ENCODE measurements at regions of chr6 and their contacts with region 1.

Region 1: DNA sequence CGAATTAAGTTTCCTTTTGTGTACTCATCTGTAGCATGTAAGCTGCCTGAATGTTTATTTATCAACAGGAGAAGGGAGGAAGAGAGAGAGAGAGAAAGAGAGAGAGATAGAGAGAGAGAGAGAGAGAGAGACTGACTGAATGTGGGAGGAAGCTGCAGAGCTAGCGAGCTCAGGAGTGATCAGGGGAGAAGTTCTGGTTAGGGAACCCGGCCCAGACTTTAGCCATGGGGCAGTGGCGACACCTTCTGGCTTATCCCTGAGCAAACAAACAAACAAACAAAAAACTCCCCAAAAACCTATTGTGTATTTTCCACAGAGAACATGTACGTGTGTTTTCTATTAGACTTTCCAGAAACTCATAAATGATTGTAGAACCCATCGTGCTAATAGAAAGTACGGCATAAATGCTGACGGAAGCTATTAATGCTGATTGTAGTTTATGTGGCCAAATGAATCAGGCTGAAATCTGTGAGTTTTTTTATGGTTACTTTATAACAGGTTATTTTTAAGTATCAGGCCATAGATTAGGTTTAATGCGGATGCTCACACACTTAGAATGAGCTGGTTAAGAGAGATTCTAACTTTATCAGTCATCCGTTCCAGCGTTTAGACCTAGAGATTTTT is 92.8 kb downstream of the CLIC5 start:
- DNase-seq: peak; percentile 39 to 58 (median 56)
- H3K4me3 ChIP-seq: no peak overlapping the region
- H3K4me3 Mint-ChIP-seq: no peak overlapping the region
- H3K27ac ChIP-seq: no peak overlapping the region
- H3K27ac Mint-ChIP-seq: no peak overlapping the region
- H3K4me1 ChIP-seq: no peaks in the 10 kb centered on the region
- H3K4me1 Mint-ChIP-seq: peaks cover 5% of the 10 kb centered on the region
- H3K27me3 ChIP-seq: no peaks in the 10 kb centered on the region
- H3K27me3 Mint-ChIP-seq: peaks cover 1 to 2% (median 2%) of the 10 kb centered on the region in 3 donors
- CTCF ChIP-seq: peak; percentile 72

Region 2: DNA sequence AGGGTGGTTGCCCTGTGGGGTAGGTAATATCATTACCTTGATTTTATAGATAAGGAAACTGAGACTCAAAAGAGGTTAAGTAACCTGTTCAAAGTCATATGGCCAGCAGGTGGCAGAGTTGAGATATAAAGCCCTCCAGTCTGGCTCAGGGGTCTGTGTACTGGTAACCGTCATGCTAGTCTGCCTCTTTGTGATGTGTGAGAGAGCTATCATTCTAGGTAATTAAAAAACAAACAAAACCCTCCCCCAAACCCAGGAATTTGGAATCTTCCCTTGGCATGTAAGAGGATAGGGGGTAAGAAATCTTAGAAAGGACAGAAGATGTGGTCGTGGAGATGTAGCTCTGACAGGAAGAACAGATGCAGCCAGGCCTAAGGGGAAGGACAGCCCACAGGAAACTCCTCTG is 1329.3 kb before region 1 on chr6:
- intact Hi-C with region 1: loop called in 1 of 2 experiments (anchors 10 kb)
- DNase-seq: peak; percentile 15 to 58 (median 56)
- H3K4me3 ChIP-seq: no peak overlapping the region
- H3K4me3 Mint-ChIP-seq: peak overlapping the region in 1 of 2 donors; percentile 19
- H3K27ac ChIP-seq: no peak overlapping the region
- H3K27ac Mint-ChIP-seq: no peak overlapping the region
- H3K4me1 ChIP-seq: peaks cover 26% of the 10 kb centered on the region in 2 donors
- H3K4me1 Mint-ChIP-seq: peaks cover 41% of the 10 kb centered on the region
- H3K27me3 ChIP-seq: no peaks in the 10 kb centered on the region
- H3K27me3 Mint-ChIP-seq: peaks cover 4 to 9% (median 5%) of the 10 kb centered on the region in 3 donors
- CTCF ChIP-seq: peak; percentile 76

Region 3: GRCh38 chr6:45965792-45966191 is 43.0 kb after region 1 on chr6:
- intact Hi-C with region 1: no loop called
- DNase-seq: no peak
- H3K4me3 ChIP-seq: no peak overlapping the region
- H3K4me3 Mint-ChIP-seq: no peak overlapping the region
- H3K27ac ChIP-seq: no peak overlapping the region
- H3K27ac Mint-ChIP-seq: no peak overlapping the region
- H3K4me1 ChIP-seq: peaks cover 4 to 7% of the 10 kb centered on the region in 2 donors
- H3K4me1 Mint-ChIP-seq: peaks cover 9% of the 10 kb centered on the region
- H3K27me3 ChIP-seq: no peaks in the 10 kb centered on the region
- H3K27me3 Mint-ChIP-seq: peaks cover 0 to 4% (median 2%) of the 10 kb centered on the region in 3 donors
- CTCF ChIP-seq: no peak

Region 4: DNA sequence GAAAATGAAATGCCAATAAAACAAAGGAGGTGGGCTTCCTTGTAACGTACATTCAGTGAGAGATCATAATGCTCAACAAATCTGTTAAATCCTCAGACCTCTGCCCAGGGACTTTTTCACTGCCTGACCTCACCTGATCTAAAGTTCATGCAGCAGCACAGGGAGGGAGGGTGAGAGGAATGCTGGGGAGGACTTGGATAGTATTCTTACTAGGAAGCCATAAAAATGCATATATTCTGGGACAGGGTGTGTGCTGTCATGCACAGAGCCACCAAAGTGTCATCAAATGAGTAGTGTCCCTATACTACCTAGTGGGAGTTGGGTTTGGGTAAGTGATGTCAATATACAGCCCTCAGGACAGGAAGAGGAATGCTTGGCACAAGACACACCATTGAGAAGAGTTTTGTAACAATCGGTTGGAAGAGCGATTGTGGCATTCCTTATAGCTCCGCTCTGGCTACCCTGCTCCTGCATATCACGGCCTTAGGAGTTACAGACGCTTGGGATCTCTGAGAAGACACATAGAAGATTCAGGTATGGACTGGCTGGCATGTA is 60.3 kb after region 1 on chr6:
- intact Hi-C with region 1: no loop called
- DNase-seq: no peak
- H3K4me3 ChIP-seq: no peak overlapping the region
- H3K4me3 Mint-ChIP-seq: no peak overlapping the region
- H3K27ac ChIP-seq: no peak overlapping the region
- H3K27ac Mint-ChIP-seq: no peak overlapping the region
- H3K4me1 ChIP-seq: no peaks in the 10 kb centered on the region
- H3K4me1 Mint-ChIP-seq: no peaks in the 10 kb centered on the region
- H3K27me3 ChIP-seq: no peaks in the 10 kb centered on the region
- H3K27me3 Mint-ChIP-seq: peaks cover 0 to 2% (median 0%) of the 10 kb centered on the region in 3 donors
- CTCF ChIP-seq: no peak

Region 5: GRCh38 chr6:46203391-46204177 is 280.7 kb after region 1 on chr6:
- intact Hi-C with region 1: no loop called
- DNase-seq: no peak
- H3K4me3 ChIP-seq: no peak overlapping the region
- H3K4me3 Mint-ChIP-seq: no peak overlapping the region
- H3K27ac ChIP-seq: no peak overlapping the region
- H3K27ac Mint-ChIP-seq: no peak overlapping the region
- H3K4me1 ChIP-seq: no peaks in the 10 kb centered on the region
- H3K4me1 Mint-ChIP-seq: no peaks in the 10 kb centered on the region
- H3K27me3 ChIP-seq: no peaks in the 10 kb centered on the region
- H3K27me3 Mint-ChIP-seq: peaks cover 0 to 3% (median 2%) of the 10 kb centered on the region in 3 donors
- CTCF ChIP-seq: no peak

Measured in CD14-positive monocyte (primary cell).